GM12878 (cell line): ENCODE measurements at regions of chr4 and their contacts with region 1.

Region 1: DNA sequence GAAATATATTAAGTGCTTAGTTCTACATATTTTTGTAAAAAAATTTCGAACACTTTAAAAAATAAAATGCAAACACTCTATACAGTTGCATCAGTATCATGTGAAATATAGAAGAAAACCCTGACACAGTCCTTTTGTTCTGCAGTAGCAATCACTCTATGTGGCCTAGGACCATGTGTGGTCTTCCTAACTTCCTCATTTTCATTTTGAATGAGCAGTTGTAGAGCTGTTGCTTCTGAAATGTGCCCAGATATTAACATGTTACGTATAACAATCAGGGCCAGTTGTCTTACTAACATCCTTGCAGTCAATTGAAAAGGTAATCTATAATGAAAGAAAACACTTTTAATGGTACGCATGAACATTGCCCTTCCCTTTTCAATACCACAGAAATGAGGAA is 107.9 kb downstream of the ZNF827 start:
- DNase-seq: no peak
- ATAC-seq: peak; percentile 79
- H3K4me3 ChIP-seq: 0 out of 2 replicates have a peak overlapping the region, but pooled peaks have one; percentile 16
- H3K27ac ChIP-seq: peak overlapping the region; percentile 77
- H3K4me1 ChIP-seq: peaks cover 30% of the 10 kb centered on the region
- H3K27me3 ChIP-seq: no peaks in the 10 kb centered on the region
- CTCF ChIP-seq: no peak
- EP300 ChIP-seq: 0 out of 4 replicates have a peak, but pooled peaks of 1 of the 2 experiments have one; percentile 20
- POLR2A ChIP-seq: no peak
- RAD21 ChIP-seq: no peak

Region 2: DNA sequence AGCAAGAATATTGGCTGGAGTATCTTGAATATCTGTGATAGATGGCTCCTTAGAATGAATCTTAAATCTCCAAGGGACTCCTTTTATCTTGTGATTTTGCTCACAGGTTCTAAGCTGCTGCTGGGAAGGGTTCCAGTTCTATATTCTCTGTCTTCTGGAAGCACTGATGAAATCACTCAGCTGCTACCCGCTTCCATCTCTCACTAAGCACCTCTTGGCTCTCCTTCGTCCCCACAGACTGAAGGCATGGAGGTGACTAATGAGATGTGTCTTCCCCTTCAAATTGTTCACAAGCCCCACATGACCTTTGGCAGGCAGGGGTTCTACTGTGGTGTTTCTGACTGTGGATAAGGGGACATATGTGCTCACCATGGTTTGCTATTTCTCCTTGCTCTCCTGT is 74.9 kb before region 1 on chr4:
- CTCF ChIA-PET with region 1: no interaction called
- POLR2A ChIA-PET with region 1: no interaction called
- RAD21 ChIA-PET with region 1: no interaction called
- SMC1A ChIA-PET with region 1: no interaction called
- in situ Hi-C with region 1: no loop called
- intact Hi-C with region 1: no loop called
- DNase-seq: no peak
- ATAC-seq: no peak
- H3K4me3 ChIP-seq: no peak overlapping the region
- H3K27ac ChIP-seq: no peak overlapping the region
- H3K4me1 ChIP-seq: no peaks in the 10 kb centered on the region
- H3K27me3 ChIP-seq: no peaks in the 10 kb centered on the region
- CTCF ChIP-seq: no peak
- EP300 ChIP-seq: no peak
- POLR2A ChIP-seq: no peak
- RAD21 ChIP-seq: no peak

Region 3: DNA sequence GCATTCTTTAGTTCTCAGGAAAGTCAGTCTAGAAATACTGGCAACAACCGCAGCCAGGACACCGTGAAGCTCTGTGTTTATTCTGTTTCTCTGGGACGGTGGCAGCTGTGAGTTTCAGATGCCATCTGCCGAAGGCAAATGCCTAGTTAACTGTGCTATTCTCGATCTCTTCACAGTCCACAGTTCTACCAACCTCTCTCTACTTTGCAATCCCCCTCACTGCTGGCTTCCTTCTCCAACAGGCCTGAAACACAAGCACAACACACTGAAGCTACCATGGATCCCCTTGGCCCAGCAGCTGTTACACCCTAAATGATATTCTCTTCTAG is 10.9 kb before region 1 on chr4:
- CTCF ChIA-PET with region 1: interaction called, 4 read pairs
- POLR2A ChIA-PET with region 1: interaction called, 3 read pairs
- RAD21 ChIA-PET with region 1: interaction called, 7 read pairs
- SMC1A ChIA-PET with region 1: interaction called, 15 read pairs
- in situ Hi-C with region 1: no loop called
- intact Hi-C with region 1: no loop called
- DNase-seq: no peak
- ATAC-seq: peak; percentile 31
- H3K4me3 ChIP-seq: no peak overlapping the region
- H3K27ac ChIP-seq: no peak overlapping the region; the same call in 1 of the 2 replicates
- H3K4me1 ChIP-seq: peaks cover 29% of the 10 kb centered on the region
- H3K27me3 ChIP-seq: no peaks in the 10 kb centered on the region
- CTCF ChIP-seq: no peak
- EP300 ChIP-seq: no peak
- POLR2A ChIP-seq: no peak
- RAD21 ChIP-seq: no peak

Region 4: DNA sequence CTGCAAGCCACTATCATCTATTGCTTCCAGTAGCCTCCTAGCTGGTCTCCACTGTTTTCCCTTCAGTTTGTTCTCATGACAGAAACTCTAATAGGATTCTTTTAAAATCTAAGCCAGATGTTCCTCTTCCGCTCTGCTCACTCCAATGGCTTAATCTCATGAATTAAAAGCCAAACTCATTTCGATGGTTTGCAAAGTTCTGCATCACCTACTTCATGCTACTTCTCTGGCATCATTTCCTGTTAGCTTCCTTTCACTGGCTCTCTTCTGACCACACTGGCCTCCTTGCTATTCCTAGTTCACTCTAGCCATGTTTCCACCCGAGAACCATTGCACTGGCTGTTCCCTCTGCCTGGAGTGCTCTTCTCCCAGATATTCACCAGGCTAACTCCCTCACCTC is 242.8 kb after region 1 on chr4:
- CTCF ChIA-PET with region 1: no interaction called
- POLR2A ChIA-PET with region 1: no interaction called
- RAD21 ChIA-PET with region 1: no interaction called
- SMC1A ChIA-PET with region 1: no interaction called
- in situ Hi-C with region 1: no loop called
- intact Hi-C with region 1: no loop called
- DNase-seq: no peak
- ATAC-seq: peak; percentile 64
- H3K4me3 ChIP-seq: no peak overlapping the region
- H3K27ac ChIP-seq: no peak overlapping the region
- H3K4me1 ChIP-seq: peaks cover 5% of the 10 kb centered on the region
- H3K27me3 ChIP-seq: no peaks in the 10 kb centered on the region
- CTCF ChIP-seq: no peak
- EP300 ChIP-seq: no peak
- POLR2A ChIP-seq: no peak
- RAD21 ChIP-seq: no peak

Region 5: GRCh38 chr4:146957237-146957636 is 1126.5 kb after region 1 on chr4:
- CTCF ChIA-PET with region 1: no interaction called
- POLR2A ChIA-PET with region 1: no interaction called
- RAD21 ChIA-PET with region 1: no interaction called
- SMC1A ChIA-PET with region 1: no interaction called
- in situ Hi-C with region 1: no loop called
- intact Hi-C with region 1: no loop called
- DNase-seq: no peak
- ATAC-seq: no peak
- H3K4me3 ChIP-seq: no peak overlapping the region
- H3K27ac ChIP-seq: no peak overlapping the region
- H3K4me1 ChIP-seq: no peaks in the 10 kb centered on the region
- H3K27me3 ChIP-seq: no peaks in the 10 kb centered on the region
- CTCF ChIP-seq: no peak
- EP300 ChIP-seq: no peak
- POLR2A ChIP-seq: no peak
- RAD21 ChIP-seq: no peak